ENCODE measurements at regions of chr22 and their contacts with region 1.

Region 1: DNA sequence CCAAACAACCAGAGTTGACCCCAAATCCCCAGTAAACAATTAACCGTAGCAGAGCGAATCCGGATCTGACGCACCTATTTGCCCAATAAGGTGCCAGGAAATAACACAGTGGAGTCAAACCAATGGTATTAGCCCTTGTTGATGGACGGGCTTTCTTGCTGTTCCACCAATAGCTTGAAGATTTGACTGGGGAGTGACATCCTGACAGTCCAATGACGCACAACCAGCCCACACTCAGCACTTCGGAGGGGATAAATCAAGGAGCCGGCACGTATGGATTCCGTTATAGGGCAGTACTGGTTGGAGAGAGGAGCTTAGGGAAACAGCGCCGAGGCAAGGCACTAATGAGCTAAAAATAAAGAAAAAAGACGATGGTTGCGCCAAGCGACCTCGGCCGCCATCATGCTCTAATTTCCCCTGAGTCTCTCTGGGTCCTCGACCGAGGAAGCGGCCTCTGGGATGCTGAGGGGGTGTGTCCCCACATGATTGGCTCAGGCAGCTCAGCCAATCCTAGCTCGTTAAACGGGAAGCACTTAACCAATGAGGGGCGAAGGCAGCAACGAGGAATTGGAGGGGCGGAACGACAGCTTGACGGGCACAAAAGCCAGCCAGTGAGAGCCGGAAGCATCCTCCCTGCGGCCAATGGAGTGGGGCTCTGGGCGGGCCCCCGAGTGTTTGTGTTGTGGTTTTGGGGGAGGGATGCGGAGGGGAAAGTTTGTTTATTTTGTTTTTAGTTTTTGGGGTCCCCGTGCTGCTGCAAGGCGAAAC is 49.5 kb downstream of the FAM83F start:
- DNase-seq: peak; percentile 96 to 100 (median 98)
- ATAC-seq: peak; percentile 86
- H3K4me3 ChIP-seq: peak overlapping the region; percentile 67
- H3K4me3 Mint-ChIP-seq: peak overlapping the region; percentile 97
- H3K27ac ChIP-seq: peak overlapping the region; percentile 97 to 100
- H3K27ac Mint-ChIP-seq: peak overlapping the region; percentile 98
- H3K4me1 ChIP-seq: peaks cover 43% of the 10 kb centered on the region
- H3K4me1 Mint-ChIP-seq: peaks cover 45% of the 10 kb centered on the region
- H3K27me3 ChIP-seq: peaks cover 0 to 4% of the 10 kb centered on the region in 2 experiments
- H3K27me3 Mint-ChIP-seq: peaks cover 7% of the 10 kb centered on the region
- CTCF ChIP-seq: no peak

Region 2: DNA sequence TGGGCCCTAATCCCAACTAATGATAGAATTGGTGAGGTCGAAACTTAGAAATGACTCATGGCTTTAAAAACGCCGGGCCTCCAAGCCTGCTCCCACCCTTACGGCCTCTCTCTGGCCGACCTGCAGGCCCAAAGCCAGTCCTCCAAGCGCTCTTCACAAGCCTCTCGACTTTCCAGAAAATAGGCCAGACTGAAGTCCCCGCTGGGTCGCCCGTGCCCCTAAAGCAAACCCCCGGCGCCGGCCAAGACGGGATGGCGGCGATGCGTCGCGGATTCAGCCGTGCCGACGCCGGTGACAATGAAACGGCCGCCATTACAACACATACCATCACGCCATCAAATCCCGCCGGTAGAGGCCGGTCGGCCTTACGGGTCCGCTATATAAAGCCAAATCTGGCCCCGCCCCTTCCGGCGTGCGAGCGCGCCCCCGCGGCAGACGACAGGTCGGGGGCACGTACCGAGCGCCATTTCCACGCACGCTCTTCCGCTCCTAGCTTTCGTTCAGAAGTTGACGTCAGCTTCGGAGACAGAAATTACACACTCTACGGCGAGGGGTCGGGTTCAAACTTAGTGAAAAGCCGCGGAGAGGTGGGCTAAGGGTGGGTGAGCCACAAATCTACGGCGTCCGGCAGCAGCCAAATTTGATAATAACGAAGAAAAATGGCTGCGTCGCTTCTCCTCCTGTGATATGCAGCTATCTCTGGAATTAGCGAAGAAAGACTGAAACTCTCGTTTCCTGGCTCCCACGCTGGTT is 724.8 kb before region 1 on chr22 and contains the start of gene RPL3:
- CTCF ChIA-PET with region 1: no interaction called
- POLR2A ChIA-PET with region 1: interaction called, 30 read pairs
- intact Hi-C with region 1: no loop called
- DNase-seq: peak; percentile 96 to 99 (median 98)
- ATAC-seq: peak; percentile 76
- H3K4me3 ChIP-seq: peak within 1 kb of the TSS; percentile 90
- H3K4me3 Mint-ChIP-seq: peak within 1 kb of the TSS; percentile 99
- H3K27ac ChIP-seq: peak within 1 kb of the TSS; percentile 88 to 92
- H3K27ac Mint-ChIP-seq: peak within 1 kb of the TSS; percentile 96
- H3K4me1 ChIP-seq: peaks cover 57% of the 10 kb centered on the region
- H3K4me1 Mint-ChIP-seq: peaks cover 41% of the 10 kb centered on the region
- H3K27me3 ChIP-seq: no peaks in the 10 kb centered on the region
- H3K27me3 Mint-ChIP-seq: no peaks in the 10 kb centered on the region
- CTCF ChIP-seq: no peak
- total RNA-seq, gene RPL3: 3,952 to 3,974 TPM

Region 3: GRCh38 chr22:39765046-39765445 is 279.2 kb before region 1 on chr22:
- CTCF ChIA-PET with region 1: no interaction called
- POLR2A ChIA-PET with region 1: no interaction called
- intact Hi-C with region 1: no loop called
- DNase-seq: no peak
- ATAC-seq: no peak
- H3K4me3 ChIP-seq: no peak overlapping the region
- H3K4me3 Mint-ChIP-seq: no peak overlapping the region
- H3K27ac ChIP-seq: no peak overlapping the region
- H3K27ac Mint-ChIP-seq: no peak overlapping the region
- H3K4me1 ChIP-seq: no peaks in the 10 kb centered on the region
- H3K4me1 Mint-ChIP-seq: no peaks in the 10 kb centered on the region
- H3K27me3 ChIP-seq: no peaks in the 10 kb centered on the region
- H3K27me3 Mint-ChIP-seq: no peaks in the 10 kb centered on the region
- CTCF ChIP-seq: no peak

Region 4: DNA sequence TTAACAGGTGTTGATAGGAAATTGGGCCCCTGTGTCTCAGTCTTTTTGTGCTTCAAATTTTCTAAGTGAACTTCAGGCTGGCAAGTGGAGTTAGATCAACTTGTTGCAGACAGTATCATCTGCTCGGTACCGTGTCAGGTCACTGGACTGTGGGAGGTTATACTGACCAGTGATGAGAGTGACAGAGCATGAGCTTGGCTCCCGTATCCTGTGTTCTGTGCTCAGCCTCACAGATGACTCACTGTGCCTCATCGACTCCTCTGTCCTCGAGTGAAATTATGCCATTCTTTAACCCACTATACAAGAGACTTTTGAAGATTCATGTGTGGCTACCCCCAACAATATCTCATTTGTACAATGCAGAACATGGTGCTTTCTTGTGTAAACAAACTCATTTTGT is 135.5 kb before region 1 on chr22:
- CTCF ChIA-PET with region 1: no interaction called
- POLR2A ChIA-PET with region 1: interaction called, 11 read pairs
- intact Hi-C with region 1: no loop called
- DNase-seq: peak in 7 of 14 experiments; percentile 24 to 64 (median 59)
- ATAC-seq: peak; percentile 45
- H3K4me3 ChIP-seq: peak overlapping the region; percentile 70
- H3K4me3 Mint-ChIP-seq: peak overlapping the region; percentile 97
- H3K27ac ChIP-seq: peak overlapping the region; percentile 62 to 80
- H3K27ac Mint-ChIP-seq: no peak overlapping the region
- H3K4me1 ChIP-seq: peaks cover 66% of the 10 kb centered on the region
- H3K4me1 Mint-ChIP-seq: peaks cover 90% of the 10 kb centered on the region
- H3K27me3 ChIP-seq: no peaks in the 10 kb centered on the region
- H3K27me3 Mint-ChIP-seq: no peaks in the 10 kb centered on the region
- CTCF ChIP-seq: no peak

Region 5: DNA sequence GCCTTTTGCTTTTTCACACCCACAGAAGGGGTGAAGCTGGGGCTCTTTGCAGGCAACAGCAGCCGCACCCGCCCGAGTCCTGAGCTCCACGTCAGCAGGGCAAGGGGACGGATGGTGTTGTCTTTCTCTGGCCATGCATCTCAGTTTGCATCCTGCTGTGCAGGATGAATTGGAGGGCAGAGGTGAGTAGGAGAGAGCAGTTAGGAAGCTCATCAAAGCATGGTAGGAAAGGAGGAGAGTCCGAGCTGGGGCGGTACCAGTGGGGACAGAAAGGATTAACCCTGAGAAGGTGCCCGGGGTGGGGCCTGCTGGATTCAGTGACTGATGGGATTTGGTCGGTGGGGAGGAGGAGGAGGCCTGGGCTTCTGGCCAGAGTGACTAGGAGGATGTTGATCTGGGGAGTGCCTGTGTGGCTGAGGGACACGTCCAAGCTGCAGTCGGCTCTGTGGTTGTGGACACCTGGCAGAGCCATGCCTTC is 35.0 kb before region 1 on chr22:
- CTCF ChIA-PET with region 1: no interaction called
- POLR2A ChIA-PET with region 1: interaction called, 14 read pairs
- intact Hi-C with region 1: no loop called
- DNase-seq: no peak
- ATAC-seq: no peak
- H3K4me3 ChIP-seq: peak overlapping the region; percentile 38
- H3K4me3 Mint-ChIP-seq: peak overlapping the region; percentile 84
- H3K27ac ChIP-seq: no peak overlapping the region
- H3K27ac Mint-ChIP-seq: peak overlapping the region; percentile 72
- H3K4me1 ChIP-seq: peaks cover 13% of the 10 kb centered on the region
- H3K4me1 Mint-ChIP-seq: peaks cover 11% of the 10 kb centered on the region
- H3K27me3 ChIP-seq: peaks cover 0 to 2% of the 10 kb centered on the region in 2 experiments
- H3K27me3 Mint-ChIP-seq: peaks cover 14% of the 10 kb centered on the region
- CTCF ChIP-seq: no peak

Region 6: DNA sequence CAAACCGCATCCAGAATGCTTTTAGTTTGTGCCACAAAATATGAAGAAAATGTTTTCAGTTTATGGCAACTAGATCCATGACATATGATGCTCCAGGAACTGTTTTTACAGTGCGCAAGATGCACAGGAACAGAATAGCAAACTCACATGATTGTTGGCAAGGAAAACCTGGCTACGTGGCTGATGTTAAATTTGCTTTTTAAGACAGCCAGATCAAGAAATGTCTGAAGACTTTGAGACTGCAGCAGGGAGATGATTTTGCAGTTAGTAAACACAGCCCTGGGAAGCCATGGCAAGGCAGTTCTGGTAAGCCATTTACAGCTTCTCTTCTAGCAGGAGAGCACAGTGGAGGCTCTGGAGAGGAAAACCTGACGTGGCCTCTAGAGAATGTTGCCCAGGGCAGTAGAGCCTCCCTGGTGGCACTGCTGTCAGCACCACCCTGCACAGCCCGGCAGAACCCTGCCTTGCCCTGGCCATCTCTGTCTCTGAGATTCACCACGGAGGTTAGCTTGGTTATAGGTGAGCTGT is 63.6 kb after region 1 on chr22:
- CTCF ChIA-PET with region 1: no interaction called
- POLR2A ChIA-PET with region 1: interaction called, 10 read pairs
- intact Hi-C with region 1: no loop called
- DNase-seq: peak in 5 of 14 experiments; percentile 7 to 23 (median 21)
- ATAC-seq: peak; percentile 59
- H3K4me3 ChIP-seq: peak overlapping the region; percentile 44
- H3K4me3 Mint-ChIP-seq: peak overlapping the region; percentile 89
- H3K27ac ChIP-seq: peak overlapping the region; percentile 4 to 23
- H3K27ac Mint-ChIP-seq: peak overlapping the region; percentile 76
- H3K4me1 ChIP-seq: peaks cover 38% of the 10 kb centered on the region
- H3K4me1 Mint-ChIP-seq: peaks cover 92% of the 10 kb centered on the region
- H3K27me3 ChIP-seq: no peaks in the 10 kb centered on the region
- H3K27me3 Mint-ChIP-seq: no peaks in the 10 kb centered on the region
- CTCF ChIP-seq: no peak

Region 7: GRCh38 chr22:40238425-40239344 is 194.4 kb after region 1 on chr22:
- CTCF ChIA-PET with region 1: interaction called, 5 read pairs
- POLR2A ChIA-PET with region 1: interaction called, 11 read pairs
- intact Hi-C with region 1: no loop called
- DNase-seq: peak in 3 of 14 experiments; percentile 31 to 40 (median 34)
- ATAC-seq: peak; percentile 13
- H3K4me3 ChIP-seq: no peak overlapping the region
- H3K4me3 Mint-ChIP-seq: peak overlapping the region; percentile 64
- H3K27ac ChIP-seq: peak overlapping the region; percentile 7 to 22
- H3K27ac Mint-ChIP-seq: peak overlapping the region; percentile 85
- H3K4me1 ChIP-seq: peaks cover 71% of the 10 kb centered on the region
- H3K4me1 Mint-ChIP-seq: peaks cover 98% of the 10 kb centered on the region
- H3K27me3 ChIP-seq: no peaks in the 10 kb centered on the region
- H3K27me3 Mint-ChIP-seq: no peaks in the 10 kb centered on the region
- CTCF ChIP-seq: no peak

Region 8: GRCh38 chr22:40636380-40637182 is 592.3 kb after region 1 on chr22 and contains the start of gene MRTFA:
- CTCF ChIA-PET with region 1: no interaction called
- POLR2A ChIA-PET with region 1: interaction called, 11 read pairs
- intact Hi-C with region 1: no loop called
- DNase-seq: peak; percentile 97 to 100 (median 99)
- ATAC-seq: peak; percentile 93
- H3K4me3 ChIP-seq: peak within 1 kb of the TSS; percentile 96
- H3K4me3 Mint-ChIP-seq: peak within 1 kb of the TSS; percentile 100
- H3K27ac ChIP-seq: peak within 1 kb of the TSS; percentile 88 to 93
- H3K27ac Mint-ChIP-seq: peak within 1 kb of the TSS; percentile 99
- H3K4me1 ChIP-seq: peaks cover 38% of the 10 kb centered on the region
- H3K4me1 Mint-ChIP-seq: peaks cover 48% of the 10 kb centered on the region
- H3K27me3 ChIP-seq: no peaks in the 10 kb centered on the region
- H3K27me3 Mint-ChIP-seq: no peaks in the 10 kb centered on the region
- CTCF ChIP-seq: no peak
- total RNA-seq, gene MRTFA: 55.3 to 58.9 TPM